Left ventricle myocardium superior (tissue), 1 donor: ENCODE measurements at regions of chr11 and their contacts with region 1.

Region 1: GRCh38 chr11:106076919-106077608 is at the start of gene KBTBD3:
- DNase-seq: peak; percentile 98
- ATAC-seq: peak; percentile 97
- total RNA-seq, gene KBTBD3: 10.0 TPM

Region 2: DNA sequence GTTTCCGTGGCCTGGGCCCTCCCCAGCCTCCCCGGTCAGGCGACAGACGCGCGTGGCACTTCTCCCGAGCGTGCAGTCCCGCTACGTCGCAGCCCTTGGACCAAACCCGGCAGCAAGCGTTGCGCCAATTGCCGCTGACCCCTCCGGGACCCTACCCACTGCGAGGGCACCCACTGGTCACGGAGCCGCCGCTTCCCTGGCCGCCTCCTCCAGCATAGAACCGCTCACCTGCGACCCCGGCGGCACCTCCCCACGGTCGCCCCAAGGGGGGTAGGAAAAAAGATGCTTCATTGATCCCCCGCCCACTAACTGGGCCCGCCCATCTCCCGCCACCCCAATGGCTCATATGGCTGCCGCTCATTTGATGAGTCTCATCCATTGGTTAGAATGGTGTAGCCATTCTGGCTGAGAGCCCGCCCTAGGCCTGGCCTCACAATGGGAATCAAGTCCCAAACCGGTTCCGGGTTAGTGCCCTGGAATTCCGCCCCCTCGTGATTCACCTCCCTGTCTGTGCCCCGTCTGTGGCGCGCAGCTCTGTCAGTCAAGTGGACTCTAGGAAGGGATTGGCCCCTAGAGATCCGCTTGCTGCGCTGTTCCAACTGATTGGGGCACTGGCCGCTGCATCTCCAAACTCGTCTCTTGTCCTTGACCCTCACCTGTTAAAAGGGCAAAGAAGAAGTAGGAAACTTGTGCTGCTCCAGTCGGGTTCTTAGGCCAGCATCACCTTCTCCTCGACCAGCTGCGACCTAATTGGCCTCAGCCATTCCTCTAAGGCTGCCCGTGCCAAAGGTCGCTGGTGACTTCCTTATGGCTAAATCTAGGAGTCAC is 54.9 kb before region 1 on chr11 and contains the start of gene MSANTD4:
- intact Hi-C with region 1: loop called (anchors 10 kb)
- DNase-seq: peak; percentile 99
- ATAC-seq: peak; percentile 99
- total RNA-seq, gene MSANTD4: 18.4 TPM

Region 3: DNA sequence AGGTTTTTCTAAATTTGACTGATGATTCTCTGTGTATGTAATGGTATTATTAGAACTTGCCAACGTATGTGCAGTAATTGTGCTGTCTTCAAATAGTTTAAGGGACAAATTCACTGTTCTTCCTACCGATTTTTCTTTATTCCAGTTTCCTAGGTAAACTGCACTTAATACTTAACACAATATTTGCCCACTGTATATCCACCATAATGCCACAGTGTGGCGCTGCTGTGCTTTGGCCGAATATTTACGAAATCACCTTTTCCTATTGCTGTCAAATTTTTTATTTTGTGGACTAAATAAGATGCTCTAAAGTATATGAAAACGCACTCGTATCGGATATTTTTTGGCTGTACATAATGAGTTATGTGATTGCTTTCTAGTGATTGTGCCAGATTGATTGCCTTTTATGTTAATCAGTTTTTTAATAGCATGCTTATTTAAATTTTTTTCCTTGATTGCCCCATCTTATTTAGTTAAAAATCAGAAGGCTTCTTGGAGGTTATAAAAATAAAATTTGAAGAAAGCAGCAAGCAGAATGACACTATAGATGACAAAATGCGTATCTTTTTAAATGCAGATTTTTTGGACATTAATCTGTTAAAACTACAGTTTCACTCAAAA is 10.9 kb after region 1 on chr11:
- intact Hi-C with region 1: no loop called
- DNase-seq: peak; percentile 51
- ATAC-seq: peak; percentile 60